Activated CD8-positive, alpha-beta T cell treated with anti-CD3 and anti-CD28 coated beads, Interleukin-2, amount 10 ng/mL, durations not matched to agents 7 days and 5 days (primary cell): ENCODE measurements at regions of chr15 and their contacts with region 1.

Region 1: GRCh38 chr15:90598031-90598577 is 68.4 kb downstream of the CRTC3 start:
- DNase-seq: peak; percentile 38
- ATAC-seq: peak; percentile 8
- H3K4me3 Mint-ChIP-seq: peak overlapping the region; percentile 46
- H3K27ac Mint-ChIP-seq: peak overlapping the region; percentile 93
- H3K4me1 Mint-ChIP-seq: peaks cover 80% of the 10 kb centered on the region
- H3K27me3 Mint-ChIP-seq: no peaks in the 10 kb centered on the region

Region 2: DNA sequence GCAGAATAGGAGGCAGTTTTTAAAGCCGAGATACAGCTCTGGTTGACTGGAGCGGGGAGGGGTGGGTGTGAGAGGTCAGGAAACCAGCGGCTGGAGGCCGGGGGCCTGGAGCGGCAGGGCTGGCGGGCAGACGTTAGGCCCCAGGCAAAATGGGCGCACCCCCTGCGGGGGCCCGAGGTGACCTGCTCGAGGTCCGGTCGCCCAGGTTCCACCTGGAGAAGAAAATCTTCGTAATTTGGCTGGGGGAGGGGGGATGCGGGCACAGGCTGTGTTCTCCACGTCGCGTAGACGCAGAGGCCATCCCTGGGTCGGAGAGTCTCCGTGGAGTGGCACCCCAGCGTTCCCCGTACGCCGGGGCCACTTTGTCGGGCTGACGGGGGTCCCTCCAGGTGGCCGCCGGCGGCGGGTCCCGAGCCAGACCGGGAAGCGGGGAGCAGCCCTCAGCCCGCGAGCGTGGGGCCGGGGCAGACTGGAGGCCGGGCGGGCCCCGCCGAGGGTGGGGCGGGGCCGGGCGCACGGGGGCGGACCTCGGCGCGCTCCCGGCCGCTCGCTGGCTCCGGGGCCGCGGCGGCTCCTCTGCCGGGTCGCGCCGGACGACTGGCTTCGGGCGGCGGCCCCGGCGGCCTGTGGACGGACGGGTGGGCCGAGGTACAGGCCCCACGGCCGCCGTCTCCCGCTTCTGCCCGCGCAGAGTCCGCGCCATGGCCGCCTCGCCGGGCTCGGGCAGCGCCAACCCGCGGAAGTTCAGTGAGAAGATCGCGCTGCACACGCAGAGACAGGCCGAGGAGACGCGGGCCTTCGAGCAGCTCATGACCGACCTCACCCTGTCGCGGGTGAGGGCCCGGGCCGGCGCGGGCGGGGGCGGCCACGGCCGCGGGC is 68.5 kb before region 1 on chr15 and contains the start of gene CRTC3:
- CTCF ChIA-PET with region 1: interaction called, 4 read pairs
- POLR2A ChIA-PET with region 1: interaction called, 28 read pairs
- DNase-seq: peak; percentile 62
- ATAC-seq: peak; percentile 89
- H3K4me3 Mint-ChIP-seq: peak within 1 kb of the TSS; percentile 88
- H3K27ac Mint-ChIP-seq: peak within 1 kb of the TSS; percentile 88
- H3K4me1 Mint-ChIP-seq: peaks cover 40% of the 10 kb centered on the region
- H3K27me3 Mint-ChIP-seq: no peaks in the 10 kb centered on the region
- total RNA-seq, gene CRTC3: 64.9 to 66.6 TPM

Region 3: GRCh38 chr15:90557186-90558084 is 40.7 kb before region 1 on chr15:
- CTCF ChIA-PET with region 1: interaction called, 19 read pairs
- POLR2A ChIA-PET with region 1: interaction called, 12 read pairs
- DNase-seq: no peak
- ATAC-seq: peak; percentile 28
- H3K4me3 Mint-ChIP-seq: peak overlapping the region; percentile 30
- H3K27ac Mint-ChIP-seq: peak overlapping the region; percentile 53
- H3K4me1 Mint-ChIP-seq: peaks cover 60% of the 10 kb centered on the region
- H3K27me3 Mint-ChIP-seq: no peaks in the 10 kb centered on the region

Region 4: DNA sequence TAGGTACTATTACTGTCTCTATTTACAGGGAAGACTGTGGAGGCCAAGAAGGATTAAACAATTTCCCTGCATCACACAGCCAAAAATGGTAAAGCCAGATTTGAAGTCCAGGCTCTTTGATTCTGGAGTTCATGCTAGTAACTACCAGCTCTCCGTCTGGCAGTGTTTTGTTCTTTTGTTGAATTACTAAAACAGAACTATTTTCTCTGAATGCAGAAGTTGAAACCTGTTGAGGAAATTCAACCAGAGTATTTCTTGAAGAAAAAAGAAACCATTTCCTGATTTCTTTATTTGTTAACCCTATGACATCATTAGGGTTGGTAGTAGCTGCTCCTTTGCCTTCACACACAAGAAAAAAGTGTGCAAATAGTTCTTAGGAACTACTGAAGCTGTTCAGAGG is 34.1 kb before region 1 on chr15:
- CTCF ChIA-PET with region 1: interaction called, 19 read pairs
- POLR2A ChIA-PET with region 1: interaction called, 15 read pairs
- DNase-seq: no peak
- ATAC-seq: peak; percentile 15
- H3K4me3 Mint-ChIP-seq: peak overlapping the region; percentile 51
- H3K27ac Mint-ChIP-seq: peak overlapping the region; percentile 99
- H3K4me1 Mint-ChIP-seq: peaks cover 95% of the 10 kb centered on the region
- H3K27me3 Mint-ChIP-seq: no peaks in the 10 kb centered on the region

Region 5: GRCh38 chr15:90571063-90571541 is 27.0 kb before region 1 on chr15:
- CTCF ChIA-PET with region 1: interaction called, 13 read pairs
- POLR2A ChIA-PET with region 1: interaction called, 14 read pairs
- DNase-seq: peak; percentile 31
- ATAC-seq: peak; percentile 14
- H3K4me3 Mint-ChIP-seq: peak overlapping the region; percentile 46
- H3K27ac Mint-ChIP-seq: peak overlapping the region; percentile 70
- H3K4me1 Mint-ChIP-seq: peaks cover 90% of the 10 kb centered on the region
- H3K27me3 Mint-ChIP-seq: no peaks in the 10 kb centered on the region